A549 (cell line): ENCODE measurements at regions of chr7 and their contacts with region 1.

Region 1: DNA sequence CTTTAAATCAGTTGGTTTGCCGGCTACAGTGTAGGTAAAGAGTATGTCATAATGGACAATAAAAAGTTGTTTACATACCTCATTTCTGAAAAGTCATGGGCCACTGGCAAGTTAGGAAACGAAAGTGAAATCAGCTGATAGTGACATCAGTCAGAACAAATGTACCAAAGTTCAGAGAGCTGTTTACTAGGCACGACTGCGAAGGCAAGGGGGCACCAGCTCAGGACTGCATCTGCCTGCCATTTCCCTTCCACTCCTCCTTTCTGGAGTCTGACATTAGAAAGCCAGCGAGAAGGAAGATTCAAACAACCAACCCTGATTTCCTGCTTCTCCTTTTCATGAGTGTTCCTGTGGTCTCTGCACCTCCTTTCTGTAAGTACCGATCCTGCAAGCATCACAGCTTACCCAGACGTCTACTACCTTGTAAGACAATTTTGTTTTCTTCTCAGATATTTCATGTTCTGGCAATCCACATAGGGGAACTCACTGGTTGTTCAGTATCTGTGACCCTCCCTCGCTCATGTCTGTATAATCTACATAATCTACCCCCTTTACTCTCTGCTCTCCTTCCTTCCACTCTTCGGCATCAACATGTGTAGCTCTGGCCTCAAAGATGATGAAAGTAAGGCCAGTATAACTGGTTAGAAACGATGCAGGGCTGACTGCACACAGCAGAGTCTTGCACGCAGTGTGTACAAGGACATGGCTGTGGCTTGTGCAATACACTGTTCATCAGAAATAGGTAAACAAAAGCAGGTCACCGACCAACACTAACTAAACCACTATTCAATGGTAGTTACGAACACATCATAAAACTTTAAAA is at the start of gene TMEM140:
- DNase-seq: peak in 1 of 2 experiments; percentile 56
- ATAC-seq: peak; percentile 77 to 83
- H3K4me3 ChIP-seq: peak within 1 kb of the TSS; percentile 41
- H3K27ac ChIP-seq: peak within 1 kb of the TSS; percentile 61 to 72
- H3K4me1 ChIP-seq: peaks cover 16% of the 10 kb centered on the region
- CTCF ChIP-seq: no peak
- EP300 ChIP-seq: no peak
- POLR2A ChIP-seq: no peak
- RAD21 ChIP-seq: no peak
- polyA plus RNA-seq, gene TMEM140: 0.87 and 1.4 TPM in 2 replicates

Region 2: DNA sequence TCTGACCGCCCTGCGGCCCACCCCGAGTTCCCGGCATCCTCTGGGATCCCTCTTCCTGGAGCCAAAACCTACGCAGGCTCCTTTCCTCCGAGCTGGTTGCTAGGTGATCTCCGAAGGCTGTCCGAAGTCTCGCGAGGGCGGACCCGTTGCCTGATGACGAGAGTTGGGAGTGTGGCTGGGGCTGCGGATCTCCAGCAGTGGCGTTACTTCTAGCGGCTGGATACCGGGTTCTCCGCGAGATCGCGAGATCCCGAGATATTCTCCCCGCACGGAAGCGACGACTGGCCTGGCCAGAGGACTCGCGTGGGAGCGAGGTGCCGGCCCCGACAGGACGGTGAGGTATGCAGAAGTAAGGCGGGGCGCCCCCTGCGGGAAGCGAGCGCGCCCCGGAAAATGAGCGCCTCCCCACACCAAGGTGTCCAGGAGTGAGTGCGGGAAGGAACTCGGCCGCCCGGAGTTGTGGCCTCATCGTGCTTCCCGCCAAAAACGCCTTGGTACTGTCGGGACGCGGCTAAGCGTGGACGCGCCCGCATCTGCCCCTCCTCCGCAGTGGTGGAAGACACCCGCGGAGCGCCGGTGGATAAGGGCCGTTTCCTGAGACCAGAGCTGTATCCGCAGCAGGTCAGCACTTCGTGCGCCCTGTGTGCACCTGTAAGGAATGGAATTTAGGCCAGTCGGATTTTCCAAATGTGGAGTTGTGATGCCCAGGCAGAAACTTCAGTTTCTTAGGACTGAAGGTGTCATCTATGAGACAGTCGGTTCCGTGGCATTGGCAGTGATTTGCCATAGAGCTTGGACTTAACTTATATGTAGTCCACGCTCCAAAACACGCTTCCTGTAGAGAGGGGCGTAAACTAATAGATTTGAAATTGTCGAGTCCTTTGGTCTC is 161.5 kb before region 1 on chr7 and contains the start of gene AGBL3:
- CTCF ChIA-PET with region 1: interaction called, 4 read pairs
- POLR2A ChIA-PET with region 1: interaction called, 12 read pairs
- DNase-seq: peak; percentile 96 to 97
- ATAC-seq: peak; percentile 99
- H3K4me3 ChIP-seq: peak within 1 kb of the TSS; percentile 82
- H3K27ac ChIP-seq: peak within 1 kb of the TSS; percentile 88 to 94
- H3K4me1 ChIP-seq: peaks cover 33% of the 10 kb centered on the region
- CTCF ChIP-seq: peak; percentile 77
- EP300 ChIP-seq: no peak
- POLR2A ChIP-seq: peak; percentile 62
- RAD21 ChIP-seq: peak; percentile 31 to 68; a peak in 4 of 5 replicates
- polyA plus RNA-seq, gene AGBL3: 4.2 and 4.3 TPM in 2 replicates

Region 3: DNA sequence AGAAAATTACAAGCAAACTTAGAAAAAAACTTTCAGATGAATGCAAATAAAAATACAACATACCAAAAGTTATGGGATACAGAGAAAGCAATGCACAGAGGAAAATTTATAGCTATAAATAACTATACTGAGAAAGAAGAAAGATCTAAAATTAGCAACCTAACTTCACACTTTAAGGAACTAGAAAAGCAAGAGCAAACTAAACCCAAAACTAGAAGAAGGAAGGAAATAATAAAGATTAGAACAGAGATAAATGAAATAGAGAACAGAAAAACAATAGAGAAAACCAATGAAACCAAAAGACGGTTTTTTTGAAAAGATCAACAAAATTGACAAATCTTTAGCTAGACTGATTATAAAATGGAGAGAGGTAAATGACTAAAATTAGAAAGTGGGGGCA is 75.9 kb after region 1 on chr7:
- CTCF ChIA-PET with region 1: no interaction called
- POLR2A ChIA-PET with region 1: no interaction called
- DNase-seq: no peak
- ATAC-seq: no peak
- H3K4me3 ChIP-seq: no peak overlapping the region
- H3K27ac ChIP-seq: no peak overlapping the region
- H3K4me1 ChIP-seq: no peaks in the 10 kb centered on the region
- CTCF ChIP-seq: no peak
- EP300 ChIP-seq: no peak
- POLR2A ChIP-seq: no peak
- RAD21 ChIP-seq: no peak